Calu3 (cell line): ENCODE measurements at regions of chr10 and their contacts with region 1.

Region 1: GRCh38 chr10:17179002-17179401 is 22.5 kb downstream of the TRDMT1 start:
- DNase-seq: no peak
- H3K4me3 Mint-ChIP-seq: no peak overlapping the region
- H3K27ac Mint-ChIP-seq: no peak overlapping the region
- H3K4me1 Mint-ChIP-seq: peaks cover 23% of the 10 kb centered on the region
- H3K27me3 Mint-ChIP-seq: no peaks in the 10 kb centered on the region
- CTCF ChIP-seq: no peak

Region 2: DNA sequence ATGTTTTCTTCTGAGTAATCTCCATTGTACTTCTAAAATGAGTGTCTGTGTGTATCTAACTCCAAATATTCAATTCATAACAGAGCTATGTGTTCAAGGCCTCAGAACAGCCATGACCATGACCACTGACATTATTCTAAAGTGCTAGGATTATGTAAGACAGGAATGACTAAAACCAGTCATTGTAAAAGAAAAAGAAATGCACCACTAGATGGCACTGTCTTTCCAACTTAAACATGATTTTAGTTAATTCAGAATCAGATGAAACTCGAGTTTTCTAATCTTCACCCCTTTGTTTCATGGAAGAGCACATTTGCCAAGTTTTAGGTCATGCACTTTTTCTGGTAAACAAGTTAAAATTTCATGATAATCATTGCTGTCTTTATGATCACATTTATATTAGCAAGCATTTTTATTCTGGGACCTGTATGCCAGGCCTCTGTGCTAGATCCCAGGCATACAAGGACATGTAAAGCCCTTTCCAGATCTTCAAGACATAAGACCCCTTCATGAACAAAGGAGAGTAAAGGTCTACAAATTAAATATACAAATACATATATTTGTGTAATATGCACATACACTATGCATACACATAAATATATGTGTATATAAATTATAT is 335.6 kb before region 1 on chr10:
- CTCF ChIA-PET with region 1: no interaction called
- intact Hi-C with region 1: loop called (anchors 2 kb)
- DNase-seq: peak; percentile 11
- H3K4me3 Mint-ChIP-seq: no peak overlapping the region
- H3K27ac Mint-ChIP-seq: no peak overlapping the region
- H3K4me1 Mint-ChIP-seq: no peaks in the 10 kb centered on the region
- H3K27me3 Mint-ChIP-seq: peaks cover 23% of the 10 kb centered on the region
- CTCF ChIP-seq: peak; percentile 27

Region 3: DNA sequence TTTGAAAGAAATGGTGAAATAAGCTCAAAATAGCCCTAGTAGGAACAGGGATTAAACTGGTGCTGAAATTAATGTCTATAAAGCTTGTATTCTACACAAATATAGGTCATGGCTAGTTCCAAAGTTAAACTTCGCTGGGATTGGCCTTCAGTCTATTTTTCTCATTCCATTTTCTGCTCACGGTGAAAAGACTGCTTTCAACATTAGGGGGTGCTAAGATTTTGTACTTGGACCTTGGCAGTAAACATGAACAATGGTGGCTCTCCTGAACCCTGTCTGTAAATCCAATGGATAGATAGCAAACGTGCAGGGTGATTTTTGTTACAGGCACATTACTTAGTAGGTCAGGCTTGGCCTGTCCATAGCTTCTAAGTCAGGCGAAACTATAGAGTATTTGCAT is 325.8 kb before region 1 on chr10:
- CTCF ChIA-PET with region 1: no interaction called
- intact Hi-C with region 1: loop called (anchors 1 kb)
- DNase-seq: no peak
- H3K4me3 Mint-ChIP-seq: no peak overlapping the region
- H3K27ac Mint-ChIP-seq: no peak overlapping the region
- H3K4me1 Mint-ChIP-seq: peaks cover 27% of the 10 kb centered on the region
- H3K27me3 Mint-ChIP-seq: peaks cover 18% of the 10 kb centered on the region
- CTCF ChIP-seq: no peak

Region 4: GRCh38 chr10:17801507-17801906 is 622.5 kb after region 1 on chr10:
- CTCF ChIA-PET with region 1: no interaction called
- intact Hi-C with region 1: no loop called
- DNase-seq: no peak
- H3K4me3 Mint-ChIP-seq: no peak overlapping the region
- H3K27ac Mint-ChIP-seq: no peak overlapping the region
- H3K4me1 Mint-ChIP-seq: no peaks in the 10 kb centered on the region
- H3K27me3 Mint-ChIP-seq: no peaks in the 10 kb centered on the region
- CTCF ChIP-seq: no peak